ENCODE measurements at regions of chr2 and their contacts with region 1.

Region 1: GRCh38 chr2:197378494-197379307 is 56.1 kb downstream of the SF3B1 start:
- DNase-seq: peak; percentile 54
- ATAC-seq: peak; percentile 83
- H3K4me3 ChIP-seq: peak overlapping the region in 1 of 3 experiments; percentile 36; a peak in 1 of 6 replicates
- H3K27ac ChIP-seq: no peak overlapping the region
- H3K4me1 ChIP-seq: 0 out of 2 replicates have a peak, but pooled peaks cover 6% of the 10 kb centered on the region
- H3K27me3 ChIP-seq: peaks cover 0 to 21% of the 10 kb centered on the region in 2 experiments; a peak in 2 of 5 replicates
- CTCF ChIP-seq: peak; percentile 87
- EP300 ChIP-seq: no peak
- POLR2A ChIP-seq: no peak
- RAD21 ChIP-seq: peak; percentile 83

Region 2: GRCh38 chr2:196750982-196751635 is 627.6 kb before region 1 on chr2:
- CTCF ChIA-PET with region 1: no interaction called
- POLR2A ChIA-PET with region 1: no interaction called
- in situ Hi-C with region 1: loop called (anchors 25 kb)
- intact Hi-C with region 1: no loop called
- DNase-seq: peak; percentile 68
- ATAC-seq: peak; percentile 93
- H3K4me3 ChIP-seq: no peak overlapping the region
- H3K27ac ChIP-seq: no peak overlapping the region
- H3K4me1 ChIP-seq: peaks cover 38% of the 10 kb centered on the region
- H3K27me3 ChIP-seq: no peaks in the 10 kb centered on the region
- CTCF ChIP-seq: peak; percentile 78
- EP300 ChIP-seq: no peak
- POLR2A ChIP-seq: no peak
- RAD21 ChIP-seq: peak; percentile 44; the same call in 1 of the 2 replicates

Region 3: DNA sequence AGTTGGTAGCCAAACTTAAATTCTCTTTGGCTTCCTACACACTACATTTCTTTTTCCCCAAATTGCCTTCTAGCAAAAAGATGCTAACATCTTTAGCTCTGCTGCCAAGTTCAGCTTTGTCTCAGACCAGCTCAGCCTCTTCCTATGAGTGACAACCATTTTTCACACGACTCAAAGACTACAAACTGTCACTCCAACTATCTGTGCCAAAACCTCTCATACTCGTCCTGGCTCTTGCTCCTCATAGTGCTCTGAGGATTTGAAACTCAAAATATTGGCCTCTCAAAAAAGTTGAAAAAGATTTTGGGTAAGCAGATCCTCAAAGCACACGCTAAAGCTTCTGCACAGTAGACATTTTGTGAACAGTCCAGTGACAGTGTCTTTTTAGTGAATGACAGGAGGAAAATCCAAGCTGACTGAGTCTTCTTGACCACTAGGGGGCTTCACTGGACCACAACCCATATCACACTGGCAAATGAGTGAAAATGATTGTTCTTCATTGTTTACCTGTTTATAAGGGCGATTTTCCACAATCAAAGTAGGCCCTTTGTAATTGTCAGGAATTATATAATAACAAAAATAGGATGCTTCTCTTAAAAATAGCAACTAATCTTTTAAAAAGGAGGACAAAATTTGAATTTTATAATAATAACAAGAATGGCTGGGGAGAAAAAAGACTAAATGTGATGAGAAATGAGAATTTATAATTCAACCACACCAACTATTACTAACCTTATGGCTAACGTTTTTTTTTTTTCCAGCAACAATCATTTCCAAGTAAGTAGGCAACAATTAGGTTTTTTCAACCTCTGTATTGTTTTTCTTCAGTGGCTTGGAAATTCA is 366.7 kb before region 1 on chr2:
- CTCF ChIA-PET with region 1: interaction called, 17 read pairs
- POLR2A ChIA-PET with region 1: no interaction called
- in situ Hi-C with region 1: no loop called
- intact Hi-C with region 1: loop called (anchors 1 kb)
- DNase-seq: peak; percentile 57
- ATAC-seq: peak; percentile 97
- H3K4me3 ChIP-seq: no peak overlapping the region
- H3K27ac ChIP-seq: no peak overlapping the region
- H3K4me1 ChIP-seq: no peaks in the 10 kb centered on the region
- H3K27me3 ChIP-seq: peaks cover 0 to 8% of the 10 kb centered on the region in 2 experiments; a peak in 2 of 5 replicates
- CTCF ChIP-seq: peak; percentile 83
- EP300 ChIP-seq: no peak
- POLR2A ChIP-seq: no peak
- RAD21 ChIP-seq: peak; percentile 41; the same call in 1 of the 2 replicates

Region 4: DNA sequence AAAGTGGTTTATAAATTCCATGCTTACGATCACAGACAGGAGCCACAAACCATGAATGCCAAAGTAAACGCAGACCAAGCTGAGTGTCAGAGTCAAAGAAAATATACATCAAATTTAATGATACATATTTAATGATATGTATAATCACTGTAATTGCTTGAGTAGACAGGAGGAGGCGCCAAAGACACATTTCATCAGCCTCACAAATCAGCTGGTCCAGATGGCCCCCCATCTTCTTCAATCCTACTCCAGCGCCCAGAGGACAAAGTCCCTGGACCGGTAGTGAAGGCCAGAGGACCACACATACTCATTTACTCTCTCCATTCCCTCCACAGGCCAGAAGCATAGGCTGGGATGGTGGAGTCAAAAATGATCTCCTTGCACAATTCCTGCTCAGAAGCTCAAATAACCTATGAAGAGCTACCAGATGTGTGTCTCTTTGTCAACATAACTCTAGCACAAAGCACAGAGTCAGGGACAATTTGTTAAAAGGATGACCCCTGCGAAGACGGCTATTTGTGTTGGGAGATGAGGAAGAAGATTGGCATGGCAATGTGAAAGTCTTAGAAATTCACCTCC is 302.9 kb before region 1 on chr2:
- CTCF ChIA-PET with region 1: interaction called, 10 read pairs
- POLR2A ChIA-PET with region 1: no interaction called
- in situ Hi-C with region 1: no loop called
- intact Hi-C with region 1: loop called (anchors 1 kb)
- DNase-seq: peak; percentile 10
- ATAC-seq: peak; percentile 54; the same call in 2 of the 3 replicates
- H3K4me3 ChIP-seq: no peak overlapping the region
- H3K27ac ChIP-seq: no peak overlapping the region
- H3K4me1 ChIP-seq: no peaks in the 10 kb centered on the region
- H3K27me3 ChIP-seq: no peaks in the 10 kb centered on the region
- CTCF ChIP-seq: peak; percentile 57
- EP300 ChIP-seq: no peak
- POLR2A ChIP-seq: no peak
- RAD21 ChIP-seq: peak; percentile 48; the same call in 1 of the 2 replicates

Region 5: GRCh38 chr2:197113275-197113711 is 265.4 kb before region 1 on chr2:
- CTCF ChIA-PET with region 1: interaction called, 13 read pairs
- POLR2A ChIA-PET with region 1: no interaction called
- in situ Hi-C with region 1: no loop called
- intact Hi-C with region 1: loop called (anchors 1 kb)
- DNase-seq: peak; percentile 12
- ATAC-seq: peak; percentile 53; the same call in 2 of the 3 replicates
- H3K4me3 ChIP-seq: no peak overlapping the region
- H3K27ac ChIP-seq: no peak overlapping the region
- H3K4me1 ChIP-seq: no peaks in the 10 kb centered on the region
- H3K27me3 ChIP-seq: peaks cover 0 to 4% of the 10 kb centered on the region in 2 experiments; a peak in 1 of 5 replicates
- CTCF ChIP-seq: peak; percentile 58
- EP300 ChIP-seq: no peak
- POLR2A ChIP-seq: no peak
- RAD21 ChIP-seq: peak; percentile 37; the same call in 1 of the 2 replicates

Region 6: GRCh38 chr2:197191177-197191939 is 187.3 kb before region 1 on chr2:
- CTCF ChIA-PET with region 1: interaction called, 46 read pairs
- POLR2A ChIA-PET with region 1: no interaction called
- in situ Hi-C with region 1: loop called (anchors 5 kb)
- intact Hi-C with region 1: loop called (anchors 1 kb)
- DNase-seq: peak; percentile 40
- ATAC-seq: peak; percentile 60; the same call in 2 of the 3 replicates
- H3K4me3 ChIP-seq: no peak overlapping the region
- H3K27ac ChIP-seq: no peak overlapping the region
- H3K4me1 ChIP-seq: no peaks in the 10 kb centered on the region
- H3K27me3 ChIP-seq: no peaks in the 10 kb centered on the region
- CTCF ChIP-seq: peak; percentile 66
- EP300 ChIP-seq: no peak
- POLR2A ChIP-seq: no peak
- RAD21 ChIP-seq: no peak

Measured in HepG2 (cell line).